ENCODE measurements at regions of chr16 and their contacts with region 1.

Region 1: GRCh38 chr16:57899771-57900661 is 70.9 kb downstream of the CNGB1 start:
- DNase-seq: peak in 1 of 2 experiments; percentile 89
- H3K4me3 ChIP-seq: no peak overlapping the region
- H3K27ac ChIP-seq: no peak overlapping the region
- H3K4me1 ChIP-seq: no peaks in the 10 kb centered on the region; a peak in 2 of 7 replicates
- H3K27me3 ChIP-seq: no peaks in the 10 kb centered on the region
- CTCF ChIP-seq: peak; percentile 86 to 93 (median 88)
- EP300 ChIP-seq: no peak
- POLR2A ChIP-seq: no peak
- RAD21 ChIP-seq: peak; percentile 91 to 96

Region 2: DNA sequence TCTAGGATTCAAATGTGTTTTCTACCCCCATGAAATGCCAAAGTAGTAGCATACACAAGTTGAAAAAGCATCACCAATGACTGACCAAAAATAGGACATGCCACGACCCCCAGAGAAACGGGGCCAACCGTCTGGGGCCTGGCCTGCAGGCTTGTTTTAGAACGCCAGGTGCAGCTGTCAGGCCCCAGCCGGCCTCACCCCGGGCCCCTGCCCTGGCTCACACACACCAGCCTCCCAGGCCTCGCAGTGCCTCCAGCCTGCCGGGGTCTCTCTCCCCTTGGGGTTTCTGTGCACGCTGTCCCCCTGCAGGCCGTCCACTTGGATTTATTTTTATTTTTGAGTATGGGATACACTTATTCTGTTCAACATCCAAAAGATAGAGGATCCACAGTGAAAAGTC is 156.6 kb before region 1 on chr16:
- CTCF ChIA-PET with region 1: no interaction called
- POLR2A ChIA-PET with region 1: no interaction called
- DNase-seq: no peak
- H3K4me3 ChIP-seq: no peak overlapping the region
- H3K27ac ChIP-seq: no peak overlapping the region
- H3K4me1 ChIP-seq: no peaks in the 10 kb centered on the region
- H3K27me3 ChIP-seq: no peaks in the 10 kb centered on the region
- CTCF ChIP-seq: no peak
- EP300 ChIP-seq: no peak
- POLR2A ChIP-seq: no peak
- RAD21 ChIP-seq: no peak

Region 3: DNA sequence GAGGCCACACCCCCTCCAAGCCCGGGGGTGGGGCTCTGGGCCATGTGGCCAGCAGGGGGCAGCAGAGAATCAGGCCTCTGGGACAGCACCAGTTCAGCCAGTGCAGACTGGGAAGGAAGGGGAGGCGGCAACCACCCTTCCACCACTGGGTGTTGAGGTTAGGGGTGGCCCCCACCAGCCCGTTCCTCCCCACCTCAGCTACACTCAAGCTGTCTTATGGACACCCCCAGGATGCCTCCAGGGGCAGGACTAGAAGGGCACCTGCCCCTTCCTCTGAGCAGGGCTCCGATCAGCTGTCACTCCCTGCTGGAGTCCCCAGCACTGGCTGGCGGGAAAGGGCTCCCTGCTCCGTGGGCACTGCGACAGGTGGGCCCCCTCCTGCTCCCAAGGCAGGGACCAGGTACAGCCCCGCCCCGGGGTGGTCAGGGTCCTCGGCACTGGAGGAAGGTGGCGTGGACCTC is 142.7 kb before region 1 on chr16:
- CTCF ChIA-PET with region 1: interaction called, 15 read pairs
- POLR2A ChIA-PET with region 1: no interaction called
- DNase-seq: peak in 1 of 2 experiments; percentile 99
- H3K4me3 ChIP-seq: no peak overlapping the region
- H3K27ac ChIP-seq: no peak overlapping the region
- H3K4me1 ChIP-seq: peaks cover 0 to 12% (median 7%) of the 10 kb centered on the region in 4 experiments; a peak in 4 of 7 replicates
- H3K27me3 ChIP-seq: no peaks in the 10 kb centered on the region; a peak in 1 of 7 replicates
- CTCF ChIP-seq: peak; percentile 89 to 93 (median 91)
- EP300 ChIP-seq: no peak
- POLR2A ChIP-seq: no peak
- RAD21 ChIP-seq: peak; percentile 86 to 91

Region 4: GRCh38 chr16:57795431-57795878 is 104.6 kb before region 1 on chr16:
- CTCF ChIA-PET with region 1: interaction called, 28 read pairs
- POLR2A ChIA-PET with region 1: no interaction called
- DNase-seq: peak in 1 of 2 experiments; percentile 72
- H3K4me3 ChIP-seq: no peak overlapping the region
- H3K27ac ChIP-seq: no peak overlapping the region
- H3K4me1 ChIP-seq: peaks cover 0 to 32% (median 17%) of the 10 kb centered on the region in 4 experiments; a peak in 6 of 7 replicates
- H3K27me3 ChIP-seq: peaks cover 0 to 17% (median 14%) of the 10 kb centered on the region in 4 experiments; a peak in 6 of 7 replicates
- CTCF ChIP-seq: peak; percentile 46 to 68 (median 63)
- EP300 ChIP-seq: no peak
- POLR2A ChIP-seq: no peak
- RAD21 ChIP-seq: peak; percentile 34 to 64; a peak in 3 of 4 replicates

Region 5: GRCh38 chr16:57882792-57883191 is 17.2 kb before region 1 on chr16:
- CTCF ChIA-PET with region 1: interaction called, 55 read pairs
- POLR2A ChIA-PET with region 1: no interaction called
- DNase-seq: no peak
- H3K4me3 ChIP-seq: no peak overlapping the region
- H3K27ac ChIP-seq: no peak overlapping the region
- H3K4me1 ChIP-seq: peaks cover 0 to 11% (median 3%) of the 10 kb centered on the region in 4 experiments; a peak in 5 of 7 replicates
- H3K27me3 ChIP-seq: peaks cover 0 to 5% (median under 1%) of the 10 kb centered on the region in 4 experiments; a peak in 3 of 7 replicates
- CTCF ChIP-seq: peak in 1 of 3 experiments; percentile 2; a peak in 1 of 4 replicates
- EP300 ChIP-seq: no peak
- POLR2A ChIP-seq: no peak
- RAD21 ChIP-seq: no peak

Region 6: DNA sequence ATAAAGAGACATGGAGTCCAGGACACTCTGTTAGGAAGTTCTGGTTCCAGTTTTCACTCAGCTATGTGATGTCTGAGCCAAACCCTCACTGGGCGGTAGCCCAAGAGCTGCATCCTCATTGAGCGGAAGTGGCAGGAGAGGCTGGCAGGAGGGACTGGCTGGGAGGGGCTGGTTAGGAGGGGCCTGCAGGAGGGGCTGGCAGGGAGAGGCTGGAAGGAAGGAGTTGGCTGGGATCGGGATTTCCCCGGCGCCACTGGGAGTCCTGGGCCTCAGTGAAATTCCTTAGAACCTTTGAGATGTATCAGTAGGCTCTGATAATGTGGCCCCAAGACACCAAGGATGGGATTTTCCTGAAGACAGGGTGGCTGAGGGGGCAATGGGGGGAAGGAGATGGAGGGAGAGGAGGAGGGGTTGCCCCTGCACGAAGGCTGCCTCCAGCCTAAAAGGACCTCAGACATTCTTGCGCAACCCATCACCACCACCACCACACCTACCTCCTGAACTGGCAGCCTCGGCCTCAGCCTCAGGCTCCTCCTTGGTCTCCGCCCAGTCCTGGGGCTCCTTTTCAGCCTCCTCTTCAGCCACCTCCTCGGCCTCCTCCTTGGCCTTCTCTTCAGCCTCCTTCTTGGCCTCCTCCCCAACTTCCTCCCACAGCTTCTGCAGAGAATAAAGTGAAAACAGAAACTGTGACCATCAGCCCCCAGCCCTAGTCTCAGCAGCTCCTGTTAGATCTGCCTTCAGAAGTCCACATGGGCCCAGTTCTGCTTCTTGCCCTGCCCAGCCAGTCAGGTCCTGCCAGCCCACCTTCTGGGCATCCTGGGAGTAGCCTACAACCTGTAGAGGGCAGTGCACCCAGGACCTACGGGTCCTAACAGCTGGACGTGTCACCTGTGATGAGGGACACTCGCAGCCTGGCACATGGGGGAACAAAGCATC is 39.2 kb after region 1 on chr16:
- CTCF ChIA-PET with region 1: interaction called, 28 read pairs
- POLR2A ChIA-PET with region 1: no interaction called
- DNase-seq: no peak
- H3K4me3 ChIP-seq: no peak overlapping the region
- H3K27ac ChIP-seq: no peak overlapping the region
- H3K4me1 ChIP-seq: no peaks in the 10 kb centered on the region
- H3K27me3 ChIP-seq: no peaks in the 10 kb centered on the region
- CTCF ChIP-seq: peak; percentile 17 to 54 (median 40); a peak in 3 of 4 replicates
- EP300 ChIP-seq: no peak
- POLR2A ChIP-seq: no peak
- RAD21 ChIP-seq: no peak; a peak in 1 of 4 replicates

Region 7: GRCh38 chr16:58000706-58001676 is 101.0 kb after region 1 on chr16 and contains the start of gene USB1:
- CTCF ChIA-PET with region 1: interaction called, 305 read pairs
- POLR2A ChIA-PET with region 1: no interaction called
- DNase-seq: peak; percentile 85 to 92
- H3K4me3 ChIP-seq: peak within 1 kb of the TSS; percentile 63 to 96 (median 84)
- H3K27ac ChIP-seq: no peak within 1 kb of the TSS
- H3K4me1 ChIP-seq: peaks cover 5 to 8% (median 7%) of the 10 kb centered on the region in 4 experiments; a peak in 6 of 7 replicates
- H3K27me3 ChIP-seq: peaks cover 0 to 3% (median 0%) of the 10 kb centered on the region in 4 experiments; a peak in 2 of 7 replicates
- CTCF ChIP-seq: peak; percentile 57 to 71 (median 64)
- EP300 ChIP-seq: no peak
- POLR2A ChIP-seq: peak in 1 of 2 experiments; percentile 72; a peak in 2 of 3 replicates
- RAD21 ChIP-seq: peak; percentile 49 to 66
- total RNA-seq, gene USB1: 65.4 and 72.9 TPM in 2 replicates